A549 (cell line): ENCODE measurements at regions of chr5 and their contacts with region 1.

Region 1: GRCh38 chr5:149442563-149443182 is 63.6 kb upstream of the IL17B start:
- DNase-seq: peak; percentile 74 to 78
- ATAC-seq: peak; percentile 77 to 85
- H3K4me3 ChIP-seq: no peak overlapping the region
- H3K27ac ChIP-seq: peak overlapping the region; percentile 56 to 83
- H3K4me1 ChIP-seq: peaks cover 39% of the 10 kb centered on the region
- CTCF ChIP-seq: peak; percentile 91
- EP300 ChIP-seq: no peak
- POLR2A ChIP-seq: no peak
- RAD21 ChIP-seq: peak; percentile 82 to 85

Region 2: DNA sequence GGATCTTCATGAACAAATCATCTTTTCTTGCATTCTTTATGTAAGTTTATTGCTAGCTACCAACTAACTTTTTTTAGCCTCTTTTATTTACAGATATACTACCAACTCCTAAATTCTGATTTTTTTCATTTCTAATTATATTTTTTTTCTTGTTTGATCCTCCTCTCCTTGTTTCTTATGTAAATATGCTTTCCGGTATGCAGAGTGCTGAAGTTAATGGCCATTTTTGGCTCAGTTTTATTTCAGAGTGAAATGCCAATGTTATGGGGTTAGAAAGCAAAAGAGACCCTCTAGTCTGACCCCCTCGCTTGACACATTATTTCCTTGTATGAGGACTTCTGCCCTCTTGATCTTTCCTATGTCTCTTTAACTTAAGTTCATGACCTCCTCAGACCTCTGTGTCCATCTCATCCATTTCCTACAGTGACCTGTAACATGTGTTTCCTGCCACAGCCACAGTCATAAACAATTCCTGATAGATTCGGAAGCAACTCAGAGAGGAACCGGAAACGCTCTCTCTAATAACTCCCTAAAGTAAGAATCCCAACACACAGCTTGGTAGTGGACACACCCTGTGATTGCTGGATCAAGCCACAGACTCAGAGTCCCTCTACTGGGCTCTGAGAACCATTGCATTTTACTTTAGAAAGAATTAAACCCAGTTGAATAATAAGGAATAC is 213.9 kb before region 1 on chr5:
- CTCF ChIA-PET with region 1: no interaction called
- POLR2A ChIA-PET with region 1: no interaction called
- DNase-seq: peak; percentile 74 to 85
- ATAC-seq: peak; percentile 93 to 98
- H3K4me3 ChIP-seq: no peak overlapping the region
- H3K27ac ChIP-seq: peak overlapping the region; percentile 19 to 25; a peak in 2 of 6 replicates
- H3K4me1 ChIP-seq: peaks cover 16% of the 10 kb centered on the region; the same call in 1 of the 3 replicates
- CTCF ChIP-seq: peak; percentile 64
- EP300 ChIP-seq: no peak
- POLR2A ChIP-seq: no peak
- RAD21 ChIP-seq: peak; percentile 78 to 86

Region 3: DNA sequence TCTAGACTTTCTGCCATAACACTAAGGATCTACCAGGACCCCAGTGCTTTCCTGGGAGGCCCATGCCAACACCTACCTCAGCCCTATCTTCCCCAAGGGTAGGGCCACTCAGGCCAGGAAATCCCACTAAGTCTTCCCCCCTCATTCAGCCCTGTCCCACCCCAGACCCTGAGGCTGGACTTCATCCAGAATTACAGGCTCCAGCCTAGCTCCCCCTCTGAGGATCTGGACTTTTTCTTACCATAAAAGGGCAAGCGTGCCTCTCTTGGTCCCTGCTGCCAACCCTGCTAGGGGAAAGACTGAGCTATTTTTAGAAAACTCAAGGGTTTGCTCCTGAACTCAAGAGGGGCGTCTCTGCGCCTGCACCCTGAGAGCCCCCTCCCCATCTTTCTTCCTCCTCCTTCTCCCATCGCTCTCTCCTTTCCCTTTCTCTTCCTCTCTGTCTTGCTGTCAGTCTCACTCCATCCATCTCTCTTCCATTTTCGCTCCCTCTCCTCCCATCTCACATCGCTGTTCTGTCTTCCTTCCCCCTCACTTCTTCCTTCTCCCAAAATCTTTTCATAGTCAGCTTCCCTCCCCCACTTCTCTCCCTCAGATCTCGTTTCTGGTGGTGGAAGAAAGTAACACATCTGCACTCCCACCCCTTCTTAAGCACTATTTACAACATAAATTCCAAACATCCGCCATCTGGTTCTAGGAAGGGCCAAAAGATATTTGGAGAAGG is 25.5 kb before region 1 on chr5:
- CTCF ChIA-PET with region 1: interaction called, 12 read pairs
- POLR2A ChIA-PET with region 1: no interaction called
- DNase-seq: no peak
- ATAC-seq: no peak
- H3K4me3 ChIP-seq: no peak overlapping the region
- H3K27ac ChIP-seq: peak overlapping the region in 1 of 2 experiments; percentile 79; a peak in 2 of 6 replicates
- H3K4me1 ChIP-seq: peaks cover 21% of the 10 kb centered on the region
- CTCF ChIP-seq: no peak
- EP300 ChIP-seq: no peak
- POLR2A ChIP-seq: no peak
- RAD21 ChIP-seq: no peak

Region 4: DNA sequence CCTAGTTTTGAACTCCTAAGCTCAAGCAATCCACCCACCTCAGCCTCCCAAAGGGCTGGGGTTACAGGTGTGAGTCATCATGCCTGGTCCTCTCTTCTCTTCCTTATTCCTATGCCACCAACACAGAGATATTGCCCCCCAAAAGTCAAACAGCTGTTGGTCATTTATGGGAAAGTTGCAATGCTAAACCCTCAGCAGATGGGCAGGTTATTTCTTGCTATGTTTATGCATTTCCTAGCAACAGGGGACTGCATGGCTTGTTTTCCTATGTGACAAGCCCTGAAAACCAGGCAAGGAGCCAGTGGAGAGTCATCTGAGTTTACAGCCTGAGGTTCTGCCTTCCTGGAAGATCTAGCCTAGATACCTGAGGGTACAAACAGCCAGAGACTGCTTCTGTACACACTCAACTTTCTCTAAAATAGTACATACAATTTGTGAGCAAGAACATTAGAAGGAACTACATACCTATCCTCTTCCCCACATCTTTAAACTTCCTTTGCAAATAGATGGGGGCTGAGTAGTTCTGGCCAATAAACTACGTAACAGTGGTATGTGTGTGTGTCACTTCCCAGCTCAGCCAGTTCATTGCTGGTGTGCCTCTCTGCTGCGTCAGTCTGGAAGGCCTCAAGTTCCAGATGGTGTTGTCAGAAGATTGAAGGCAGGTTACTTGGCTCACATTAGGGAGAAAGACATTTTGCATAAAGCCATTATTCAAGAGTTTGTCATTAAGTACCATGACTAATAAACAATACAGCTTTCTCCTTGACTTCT is 43.2 kb after region 1 on chr5:
- CTCF ChIA-PET with region 1: interaction called, 15 read pairs
- POLR2A ChIA-PET with region 1: interaction called, 9 read pairs
- DNase-seq: peak; percentile 63 to 94
- ATAC-seq: peak; percentile 87 to 93
- H3K4me3 ChIP-seq: no peak overlapping the region
- H3K27ac ChIP-seq: peak overlapping the region; percentile 72 to 85
- H3K4me1 ChIP-seq: peaks cover 74% of the 10 kb centered on the region
- CTCF ChIP-seq: no peak
- EP300 ChIP-seq: no peak
- POLR2A ChIP-seq: no peak
- RAD21 ChIP-seq: no peak

Region 5: DNA sequence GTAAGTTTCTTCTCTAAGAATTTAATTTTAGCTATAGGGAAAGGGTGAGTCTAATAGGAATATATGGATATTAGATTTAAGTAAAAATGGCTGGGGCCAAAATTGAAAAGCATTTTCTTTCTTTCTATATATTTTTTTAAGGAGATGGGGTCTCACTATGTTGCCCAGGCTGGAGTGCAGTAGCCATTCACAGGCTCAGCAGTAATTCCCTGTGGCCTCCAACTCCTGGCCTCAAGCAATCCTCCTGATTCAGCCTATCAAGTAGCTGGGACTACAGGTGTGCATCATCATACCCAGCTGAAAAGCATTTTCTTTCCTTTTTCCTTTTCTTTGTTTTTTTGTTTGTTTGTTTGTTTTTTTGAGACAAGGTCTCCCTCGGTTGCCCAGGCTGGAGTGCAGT is 67.5 kb after region 1 on chr5:
- CTCF ChIA-PET with region 1: interaction called, 19 read pairs
- POLR2A ChIA-PET with region 1: no interaction called
- DNase-seq: no peak
- ATAC-seq: no peak
- H3K4me3 ChIP-seq: no peak overlapping the region
- H3K27ac ChIP-seq: no peak overlapping the region
- H3K4me1 ChIP-seq: peaks cover 6% of the 10 kb centered on the region; the same call in 2 of the 3 replicates
- CTCF ChIP-seq: no peak
- EP300 ChIP-seq: no peak
- POLR2A ChIP-seq: no peak
- RAD21 ChIP-seq: no peak

Region 6: GRCh38 chr5:149544028-149544420 is 101.4 kb after region 1 on chr5:
- CTCF ChIA-PET with region 1: interaction called, 209 read pairs
- POLR2A ChIA-PET with region 1: interaction called, 4 read pairs
- DNase-seq: no peak
- ATAC-seq: no peak
- H3K4me3 ChIP-seq: no peak overlapping the region
- H3K27ac ChIP-seq: no peak overlapping the region
- H3K4me1 ChIP-seq: peaks cover 46% of the 10 kb centered on the region
- CTCF ChIP-seq: no peak
- EP300 ChIP-seq: no peak
- POLR2A ChIP-seq: no peak
- RAD21 ChIP-seq: no peak

Region 7: GRCh38 chr5:149567226-149567625 is 124.6 kb after region 1 on chr5:
- CTCF ChIA-PET with region 1: interaction called, 209 read pairs
- POLR2A ChIA-PET with region 1: interaction called, 9 read pairs
- DNase-seq: no peak
- ATAC-seq: no peak
- H3K4me3 ChIP-seq: no peak overlapping the region
- H3K27ac ChIP-seq: no peak overlapping the region
- H3K4me1 ChIP-seq: peaks cover 19% of the 10 kb centered on the region
- CTCF ChIP-seq: no peak
- EP300 ChIP-seq: no peak
- POLR2A ChIP-seq: no peak
- RAD21 ChIP-seq: no peak